Heart right ventricle (tissue), 16 donors: ENCODE measurements at regions of chr5 and their contacts with region 1.

Region 1: DNA sequence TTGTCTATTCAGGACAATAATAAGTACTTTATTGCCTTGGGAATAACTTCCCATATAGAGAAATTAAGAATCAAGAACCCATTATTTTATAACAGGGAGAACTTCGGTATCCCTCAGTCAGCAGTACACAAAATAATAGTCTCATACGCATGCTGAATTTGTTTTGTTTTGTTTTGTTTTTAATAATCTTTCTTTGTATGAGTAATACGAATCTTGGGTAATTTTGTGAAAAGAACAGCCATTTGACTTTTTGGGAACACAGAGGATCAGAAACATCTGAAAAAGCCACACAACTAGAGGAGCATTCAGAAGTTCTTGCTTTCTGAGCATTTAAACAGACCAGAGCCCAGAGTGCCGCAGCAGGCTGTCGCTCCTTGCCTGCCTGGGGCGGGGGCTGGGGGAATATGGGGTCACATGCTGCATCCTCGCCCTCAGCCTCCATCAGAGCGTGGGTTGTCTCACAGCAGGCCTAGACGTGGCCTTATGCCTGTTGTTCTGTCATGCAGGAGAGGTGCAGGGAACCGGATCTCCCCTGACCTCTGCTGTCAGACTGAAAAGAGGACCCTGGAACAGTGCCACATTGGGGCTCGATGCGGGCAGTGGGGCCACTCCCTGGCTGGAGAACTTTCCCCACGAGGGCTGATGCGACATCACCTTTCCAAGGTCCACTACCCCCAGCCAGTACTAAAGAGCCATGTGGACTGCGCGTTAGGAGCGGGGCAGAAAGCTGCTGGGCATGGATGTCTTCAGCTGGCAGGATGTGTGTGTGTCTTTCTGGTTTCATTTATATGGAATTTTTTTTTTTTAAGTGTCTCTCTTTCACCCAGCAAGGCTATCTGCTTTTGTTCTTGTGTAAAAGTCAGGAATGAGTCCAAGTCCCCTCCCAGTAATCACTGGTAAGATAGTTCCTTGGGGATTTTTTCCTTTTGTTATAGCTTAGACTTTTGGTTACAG is 133.4 kb upstream of the OTULINL start:
- DNase-seq: peak; percentile 38 to 43
- ATAC-seq: peak in 7 of 8 donors; percentile 22 to 55 (median 43)
- H3K4me3 ChIP-seq: no peak overlapping the region
- H3K27ac ChIP-seq: peak overlapping the region; percentile 18 to 90 (median 78)
- H3K4me1 ChIP-seq: peaks cover 18 to 91% (median 80%) of the 10 kb centered on the region in 9 donors
- H3K27me3 ChIP-seq: no peaks in the 10 kb centered on the region
- CTCF ChIP-seq: peak in 2 of 9 donors; percentile 15 to 26

Region 2: GRCh38 chr5:14405267-14405666 is 43.0 kb before region 1 on chr5:
- intact Hi-C with region 1: loop called in 4 of 10 experiments (anchors 5 kb)
- DNase-seq: no peak
- ATAC-seq: no peak
- H3K4me3 ChIP-seq: no peak overlapping the region
- H3K27ac ChIP-seq: no peak overlapping the region
- H3K4me1 ChIP-seq: peaks cover 2 to 69% (median 30%) of the 10 kb centered on the region in 9 donors
- H3K27me3 ChIP-seq: no peaks in the 10 kb centered on the region
- CTCF ChIP-seq: peak in 4 of 9 donors; percentile 8 to 43 (median 31)

Region 3: DNA sequence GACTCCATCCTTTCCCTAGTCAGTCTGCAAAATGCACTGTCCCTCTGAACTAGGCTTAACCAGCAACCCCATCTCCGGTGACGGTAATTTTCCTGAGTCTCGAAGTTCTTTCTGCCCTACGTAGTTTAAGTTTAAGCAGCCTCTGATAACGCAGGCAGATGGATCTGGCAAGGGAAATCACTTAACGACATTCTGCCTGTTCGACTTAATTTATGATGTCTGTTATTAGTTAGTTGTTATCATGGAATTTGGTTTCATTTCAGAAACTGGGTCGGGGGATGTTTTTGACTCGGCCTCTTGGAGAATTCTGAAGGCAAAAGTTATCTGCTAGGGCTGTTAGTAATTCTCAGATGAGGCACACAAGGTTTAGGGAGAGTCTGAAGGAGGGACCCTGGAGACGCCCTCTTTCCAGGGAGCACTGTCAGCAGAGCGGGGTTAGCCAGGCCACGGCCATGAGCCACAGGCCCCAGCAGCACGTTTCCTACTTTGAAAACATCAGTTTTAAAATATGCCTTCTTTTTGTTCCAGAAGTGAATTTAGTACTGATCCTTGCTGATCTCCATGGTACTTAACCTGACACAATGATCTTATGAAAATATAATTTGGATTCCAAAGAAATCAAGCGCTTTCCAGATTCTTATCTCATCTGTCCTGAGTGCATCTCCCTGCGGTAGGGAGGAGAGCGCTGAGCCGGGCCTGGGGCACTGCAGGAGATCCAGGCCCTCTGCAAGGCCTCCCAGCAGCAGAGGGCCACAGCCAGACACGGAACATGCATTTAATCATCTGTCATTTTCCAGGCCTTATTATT is 37.6 kb before region 1 on chr5:
- intact Hi-C with region 1: loop called in 4 of 10 experiments (anchors 5 kb)
- DNase-seq: no peak
- ATAC-seq: peak in 7 of 8 donors; percentile 41 to 67 (median 53)
- H3K4me3 ChIP-seq: no peak overlapping the region
- H3K27ac ChIP-seq: peak overlapping the region in 9 of 10 donors; percentile 39 to 79 (median 59)
- H3K4me1 ChIP-seq: peaks cover 2 to 52% (median 30%) of the 10 kb centered on the region in 9 donors
- H3K27me3 ChIP-seq: no peaks in the 10 kb centered on the region
- CTCF ChIP-seq: no peak

Region 4: GRCh38 chr5:14429101-14430050 is 18.9 kb before region 1 on chr5:
- intact Hi-C with region 1: loop called in 1 of 10 experiments (anchors 2 kb)
- DNase-seq: no peak
- ATAC-seq: peak in 7 of 8 donors; percentile 27 to 81 (median 74)
- H3K4me3 ChIP-seq: no peak overlapping the region
- H3K27ac ChIP-seq: peak overlapping the region; percentile 16 to 73 (median 58)
- H3K4me1 ChIP-seq: peaks cover 11 to 41% (median 27%) of the 10 kb centered on the region in 9 donors
- H3K27me3 ChIP-seq: no peaks in the 10 kb centered on the region
- CTCF ChIP-seq: no peak

Region 5: DNA sequence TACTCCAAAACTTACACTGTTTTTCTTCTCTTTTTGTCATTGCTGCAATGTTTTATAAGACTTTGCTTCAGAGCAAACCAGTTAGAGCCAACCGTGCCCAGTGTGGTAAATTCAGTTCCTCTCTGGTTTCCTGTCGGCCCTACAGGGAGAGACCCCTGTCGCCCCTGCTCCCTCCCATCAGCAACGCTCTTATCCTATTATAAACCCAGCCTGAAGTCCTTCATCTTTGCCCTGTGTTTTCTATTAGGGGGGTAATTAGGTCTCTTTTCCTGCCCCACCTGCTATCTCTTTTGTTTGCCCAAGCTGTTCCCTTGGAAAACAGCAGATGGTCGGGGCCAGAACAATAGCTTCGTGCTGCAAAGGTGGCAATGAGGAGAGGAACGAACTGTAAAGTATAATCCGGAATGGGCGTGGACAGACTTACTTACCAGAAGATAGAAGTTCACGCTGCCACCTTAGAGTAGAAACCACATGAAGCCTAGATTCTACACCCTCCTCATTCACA is 111.9 kb after region 1 on chr5:
- intact Hi-C with region 1: no loop called
- DNase-seq: no peak
- ATAC-seq: no peak
- H3K4me3 ChIP-seq: no peak overlapping the region
- H3K27ac ChIP-seq: peak overlapping the region in 1 of 10 donors; percentile 1
- H3K4me1 ChIP-seq: peaks cover 0 to 28% (median 0%) of the 10 kb centered on the region in 9 donors
- H3K27me3 ChIP-seq: peaks cover 0 to 9% (median 0%) of the 10 kb centered on the region in 7 donors
- CTCF ChIP-seq: no peak